ENCODE measurements at regions of chr6 and their contacts with region 1.

Region 1: GRCh38 chr6:13355043-13355951 is 27.0 kb upstream of the TBC1D7 start:
- DNase-seq: peak; percentile 70
- H3K4me3 Mint-ChIP-seq: peak overlapping the region; percentile 63
- H3K27ac Mint-ChIP-seq: peak overlapping the region; percentile 99
- H3K4me1 Mint-ChIP-seq: peaks cover 45% of the 10 kb centered on the region
- H3K27me3 Mint-ChIP-seq: no peaks in the 10 kb centered on the region

Region 2: DNA sequence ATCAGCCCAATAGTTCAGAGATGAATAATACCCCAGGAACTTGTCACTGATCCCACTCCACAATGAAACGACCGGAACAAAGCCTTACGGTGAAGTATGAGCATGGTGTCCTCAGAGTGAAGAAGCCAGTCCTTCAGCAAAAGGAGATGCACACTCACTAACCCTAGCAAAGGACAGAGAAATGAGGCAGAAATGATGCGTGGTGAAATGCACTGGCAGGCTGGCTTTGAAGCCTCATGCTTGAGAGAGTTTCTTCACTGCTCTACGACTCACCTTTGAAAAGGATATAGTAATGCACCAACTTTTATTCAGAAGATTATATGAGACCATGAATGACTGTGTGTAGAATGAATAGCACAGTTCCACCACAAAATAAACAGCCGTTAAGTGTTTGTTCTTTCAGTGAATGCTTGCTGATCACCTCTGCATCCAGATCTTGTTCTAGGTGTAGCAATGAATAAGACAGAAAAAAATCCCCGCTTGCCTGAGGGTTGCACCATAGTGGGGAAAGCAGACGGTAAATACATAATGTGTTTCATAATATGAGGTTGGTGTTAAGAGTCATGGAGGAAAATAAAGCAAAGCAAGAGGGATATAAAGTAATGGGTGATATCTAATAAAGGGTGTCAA is 563.8 kb before region 1 on chr6:
- CTCF ChIA-PET with region 1: no interaction called
- intact Hi-C with region 1: no loop called
- DNase-seq: no peak
- H3K4me3 Mint-ChIP-seq: no peak overlapping the region
- H3K27ac Mint-ChIP-seq: no peak overlapping the region
- H3K4me1 Mint-ChIP-seq: no peaks in the 10 kb centered on the region
- H3K27me3 Mint-ChIP-seq: peaks cover 10% of the 10 kb centered on the region

Region 3: DNA sequence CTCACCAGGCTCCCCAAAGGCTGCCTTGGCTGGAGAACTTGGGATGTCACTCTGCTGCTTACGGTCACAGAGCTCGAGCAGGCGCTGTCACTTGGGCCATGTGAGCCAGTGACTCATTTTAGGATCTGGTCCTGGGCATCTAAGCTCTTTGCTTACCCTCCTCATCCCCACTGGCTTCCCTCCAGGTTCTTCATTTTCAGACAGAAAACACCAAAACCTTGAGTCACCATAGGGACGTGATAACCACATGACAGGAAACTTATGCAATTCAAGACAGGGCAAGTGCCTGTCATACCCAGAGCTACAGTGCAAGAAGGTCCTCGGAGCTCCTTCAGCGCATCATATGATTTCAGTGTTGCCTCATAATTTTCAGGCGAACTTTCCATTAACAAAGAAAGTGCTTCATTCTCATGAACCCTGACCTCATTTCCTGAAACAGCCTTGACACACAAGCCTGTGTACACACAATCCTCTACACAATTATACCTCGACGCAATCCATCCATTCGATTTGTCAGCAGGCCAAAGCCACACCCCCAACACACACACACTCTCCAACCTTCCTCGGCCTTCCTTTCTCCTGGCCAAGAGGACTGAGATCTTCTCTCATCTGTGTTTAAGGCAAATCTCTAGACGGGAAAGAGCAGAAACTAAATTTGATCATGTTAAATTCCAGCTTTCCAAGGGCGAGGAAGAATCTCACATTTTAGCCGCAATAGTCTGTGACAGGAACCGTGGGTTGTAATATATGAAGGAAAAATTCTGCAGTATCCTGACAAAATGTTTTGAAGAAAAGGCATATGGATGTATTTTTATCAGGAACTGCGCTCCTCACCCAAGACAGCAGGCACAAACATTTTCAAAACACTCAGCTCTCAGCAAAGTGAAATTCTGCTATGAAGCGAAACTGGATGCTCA is 52.3 kb before region 1 on chr6:
- CTCF ChIA-PET with region 1: no interaction called
- intact Hi-C with region 1: loop called (anchors 1 kb)
- DNase-seq: peak; percentile 79
- H3K4me3 Mint-ChIP-seq: peak overlapping the region; percentile 10
- H3K27ac Mint-ChIP-seq: peak overlapping the region; percentile 86
- H3K4me1 Mint-ChIP-seq: peaks cover 38% of the 10 kb centered on the region
- H3K27me3 Mint-ChIP-seq: no peaks in the 10 kb centered on the region

Region 4: GRCh38 chr6:13375360-13375878 is 20.1 kb after region 1 on chr6:
- CTCF ChIA-PET with region 1: interaction called, 6 read pairs
- intact Hi-C with region 1: loop called (anchors 1 kb)
- DNase-seq: peak; percentile 78
- H3K4me3 Mint-ChIP-seq: no peak overlapping the region
- H3K27ac Mint-ChIP-seq: peak overlapping the region; percentile 21
- H3K4me1 Mint-ChIP-seq: peaks cover 23% of the 10 kb centered on the region
- H3K27me3 Mint-ChIP-seq: no peaks in the 10 kb centered on the region

Region 5: GRCh38 chr6:13487122-13488014 is 132.1 kb after region 1 on chr6 and contains the start of gene GFOD1:
- CTCF ChIA-PET with region 1: no interaction called
- intact Hi-C with region 1: loop called (anchors 1 kb)
- DNase-seq: peak; percentile 80
- H3K4me3 Mint-ChIP-seq: peak within 1 kb of the TSS; percentile 92
- H3K27ac Mint-ChIP-seq: peak within 1 kb of the TSS; percentile 47
- H3K4me1 Mint-ChIP-seq: peaks cover 24% of the 10 kb centered on the region
- H3K27me3 Mint-ChIP-seq: peaks cover 2% of the 10 kb centered on the region
- total RNA-seq, gene GFOD1: 3.7 to 4.2 TPM

Region 6: DNA sequence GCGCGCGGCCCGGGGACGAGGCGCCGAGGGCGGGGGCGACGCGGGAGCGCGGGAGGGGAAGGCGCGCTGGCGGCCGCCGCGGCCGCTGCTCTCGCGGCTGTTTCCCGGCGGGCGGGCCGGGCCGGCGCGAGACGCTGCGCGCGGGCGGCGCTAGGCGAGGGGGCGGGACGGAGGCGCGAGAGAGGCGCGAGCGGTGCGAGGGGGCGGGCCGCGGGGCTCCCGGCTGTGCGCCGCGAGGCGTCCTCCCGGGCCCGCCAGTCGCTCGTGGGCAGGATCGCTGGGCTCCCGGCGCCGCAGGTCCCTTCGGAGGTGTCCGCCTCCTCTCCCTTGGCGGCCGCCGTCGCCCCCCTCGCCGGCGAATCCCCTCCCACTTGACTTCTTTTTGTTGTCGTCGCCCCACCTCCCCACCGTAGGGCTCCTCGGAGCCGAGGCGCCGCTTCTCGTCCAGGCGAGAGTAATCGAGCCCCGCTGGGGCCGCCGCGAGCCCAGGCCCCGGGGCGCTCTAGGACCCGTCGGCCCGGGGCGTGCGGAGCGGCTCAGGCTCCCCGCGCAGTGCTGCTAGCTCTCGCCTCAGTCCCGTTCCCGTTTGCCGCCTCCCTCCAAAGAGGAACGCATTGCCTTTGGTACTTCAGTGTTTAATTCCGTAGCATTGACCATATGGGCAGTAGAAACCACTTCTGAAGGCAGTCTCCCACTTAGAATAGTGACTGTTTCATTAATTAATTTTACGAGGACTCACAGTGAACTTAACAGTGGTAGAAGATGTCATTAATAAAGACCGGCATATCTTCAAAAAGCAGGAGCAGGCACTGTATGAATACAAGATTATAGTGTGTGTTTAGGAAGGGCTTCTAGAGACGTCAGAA is 356.7 kb after region 1 on chr6 and contains the start of gene RANBP9:
- CTCF ChIA-PET with region 1: no interaction called
- intact Hi-C with region 1: loop called (anchors 1 kb)
- DNase-seq: peak; percentile 86
- H3K4me3 Mint-ChIP-seq: peak within 1 kb of the TSS; percentile 87
- H3K27ac Mint-ChIP-seq: peak within 1 kb of the TSS; percentile 96
- H3K4me1 Mint-ChIP-seq: peaks cover 54% of the 10 kb centered on the region
- H3K27me3 Mint-ChIP-seq: no peaks in the 10 kb centered on the region
- total RNA-seq, gene RANBP9: 61.2 to 62.9 TPM

Region 7: DNA sequence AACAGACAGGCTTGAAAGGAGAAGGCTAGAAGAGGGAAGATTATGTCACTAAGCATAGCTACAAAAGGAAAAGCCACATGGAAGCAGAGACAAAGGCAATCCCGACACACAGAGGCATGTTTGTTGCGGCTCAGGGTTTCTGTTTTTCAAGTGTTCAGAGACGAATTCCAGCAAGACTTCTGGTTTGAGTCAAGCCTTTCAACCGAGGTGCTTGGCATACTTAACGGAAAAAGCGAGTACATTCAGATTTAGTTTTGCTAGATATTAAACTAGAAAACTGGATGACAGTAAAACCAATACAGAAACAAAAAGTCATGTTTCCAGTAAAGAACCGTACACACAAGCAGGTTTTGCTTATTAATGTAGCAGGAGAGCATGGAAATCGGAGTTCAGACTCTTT is 431.8 kb after region 1 on chr6:
- CTCF ChIA-PET with region 1: interaction called, 3 read pairs
- intact Hi-C with region 1: loop called (anchors 1 kb)
- DNase-seq: peak; percentile 75
- H3K4me3 Mint-ChIP-seq: peak overlapping the region; percentile 14
- H3K27ac Mint-ChIP-seq: peak overlapping the region; percentile 79
- H3K4me1 Mint-ChIP-seq: peaks cover 34% of the 10 kb centered on the region
- H3K27me3 Mint-ChIP-seq: no peaks in the 10 kb centered on the region

Measured in activated naive CD4-positive, alpha-beta T cell treated with anti-CD3 and anti-CD28 coated beads for 36 hours (primary cell).